ENCODE measurements at regions of chr10 and their contacts with region 1.

Region 1: GRCh38 chr10:60323162-60323561 is 66.5 kb downstream of the ANK3 start:
- DNase-seq: no peak
- ATAC-seq: no peak
- H3K4me3 ChIP-seq: no peak overlapping the region
- H3K27ac ChIP-seq: no peak overlapping the region
- H3K4me1 ChIP-seq: no peaks in the 10 kb centered on the region
- H3K27me3 ChIP-seq: no peaks in the 10 kb centered on the region; a peak in 1 of 5 replicates
- CTCF ChIP-seq: no peak
- EP300 ChIP-seq: no peak
- POLR2A ChIP-seq: no peak
- RAD21 ChIP-seq: no peak

Region 2: GRCh38 chr10:60260321-60260720 is 62.8 kb before region 1 on chr10:
- CTCF ChIA-PET with region 1: no interaction called
- POLR2A ChIA-PET with region 1: no interaction called
- in situ Hi-C with region 1: no loop called
- intact Hi-C with region 1: loop called (anchors 2 kb)
- DNase-seq: no peak
- ATAC-seq: no peak
- H3K4me3 ChIP-seq: no peak overlapping the region
- H3K27ac ChIP-seq: no peak overlapping the region
- H3K4me1 ChIP-seq: no peaks in the 10 kb centered on the region
- H3K27me3 ChIP-seq: no peaks in the 10 kb centered on the region
- CTCF ChIP-seq: no peak
- EP300 ChIP-seq: no peak
- POLR2A ChIP-seq: no peak
- RAD21 ChIP-seq: no peak